Tibial artery (tissue), 4 donors: ENCODE measurements at regions of chr9 and their contacts with region 1.

Region 1: DNA sequence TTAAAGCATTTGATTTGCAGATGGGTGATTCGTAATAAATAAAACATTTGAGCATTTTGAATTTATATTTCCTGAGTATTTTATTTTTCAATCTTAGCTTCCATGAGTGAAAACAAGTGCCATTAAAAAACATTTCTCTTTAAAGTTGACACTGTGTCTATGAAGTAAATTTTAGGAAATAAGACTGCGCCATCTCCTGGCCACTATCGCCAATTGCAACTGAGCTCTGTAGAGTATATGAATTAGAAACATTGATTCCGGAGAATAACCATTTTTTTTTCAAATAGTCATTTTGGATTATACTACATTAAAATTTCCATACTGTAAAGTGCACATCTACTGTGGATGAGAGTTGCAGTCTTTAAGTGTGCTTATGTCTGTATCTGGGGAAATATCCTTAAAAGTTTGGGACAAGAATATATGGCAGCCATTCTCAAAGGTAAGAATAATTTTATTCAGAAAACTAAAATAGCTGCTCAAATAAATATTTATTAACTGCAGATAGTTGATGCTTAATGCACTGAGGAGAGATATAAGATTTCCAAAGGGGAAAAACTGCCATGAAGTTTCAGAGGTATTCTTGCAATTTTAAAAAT is 5.9 kb downstream of the DMRTA1 start:
- DNase-seq: peak in 1 of 2 donors; percentile 51
- H3K4me3 ChIP-seq: no peak overlapping the region
- H3K27ac ChIP-seq: no peak overlapping the region
- H3K4me1 ChIP-seq: peaks cover 0 to 9% (median 1%) of the 10 kb centered on the region in 4 donors
- H3K27me3 ChIP-seq: no peaks in the 10 kb centered on the region
- CTCF ChIP-seq: peak; percentile 68 to 70

Region 2: DNA sequence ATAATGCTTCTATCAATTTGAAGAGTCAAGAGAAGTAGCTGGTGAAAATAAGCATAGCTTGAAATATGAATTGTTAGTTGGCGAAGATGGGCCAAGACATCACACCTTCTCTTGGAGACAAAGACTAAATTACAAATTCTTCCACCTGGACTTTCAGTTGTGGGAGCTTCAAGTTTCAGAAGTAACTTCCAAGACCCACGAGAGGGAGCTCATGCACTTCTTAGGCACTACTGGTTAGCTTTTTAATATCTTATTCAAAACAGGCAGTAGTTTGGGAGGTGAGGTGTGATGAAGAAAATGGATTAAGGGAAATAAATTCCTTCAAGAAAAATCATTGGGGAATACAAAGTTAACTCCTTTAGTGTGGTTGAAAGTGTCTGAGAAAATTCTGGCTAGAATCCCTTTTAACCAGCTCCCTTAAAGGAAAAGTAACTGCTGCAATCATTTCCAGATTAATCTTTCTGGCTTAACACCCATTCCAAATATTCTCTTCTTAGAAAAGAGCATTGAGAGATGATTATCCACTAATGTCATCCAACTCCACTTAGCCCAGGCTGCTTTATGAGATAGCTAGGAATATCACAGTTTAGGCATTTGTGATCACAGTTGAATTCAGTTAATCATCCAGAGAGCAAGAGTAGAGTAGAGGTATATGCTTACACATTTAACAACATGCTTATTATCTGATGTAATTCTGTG is 145.4 kb before region 1 on chr9:
- intact Hi-C with region 1: loop called (anchors 10 kb)
- DNase-seq: no peak
- H3K4me3 ChIP-seq: no peak overlapping the region
- H3K27ac ChIP-seq: no peak overlapping the region
- H3K4me1 ChIP-seq: no peaks in the 10 kb centered on the region
- H3K27me3 ChIP-seq: no peaks in the 10 kb centered on the region
- CTCF ChIP-seq: peak; percentile 43 to 54

Region 3: DNA sequence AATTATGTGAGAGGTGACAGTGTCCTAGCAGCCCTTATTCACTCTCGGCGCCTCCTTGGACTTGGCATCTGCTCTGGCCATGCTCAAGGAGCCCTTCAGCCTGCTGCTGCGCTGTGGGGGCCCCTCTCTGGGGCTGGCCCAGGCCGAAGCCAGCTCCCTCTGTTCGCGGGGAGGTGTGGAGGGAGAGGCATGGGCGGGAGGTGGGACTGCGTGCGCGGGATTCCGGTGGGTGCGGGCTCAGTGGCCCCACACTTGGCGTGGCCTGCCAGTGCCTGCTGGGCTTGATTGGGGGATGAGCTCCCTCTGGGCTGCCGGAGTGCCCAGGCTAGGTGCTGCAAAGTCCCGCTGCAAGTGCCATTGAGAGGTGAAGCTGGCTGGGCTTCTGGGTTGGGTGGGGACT is 18.8 kb before region 1 on chr9:
- intact Hi-C with region 1: no loop called
- DNase-seq: no peak
- H3K4me3 ChIP-seq: no peak overlapping the region
- H3K27ac ChIP-seq: no peak overlapping the region
- H3K4me1 ChIP-seq: no peaks in the 10 kb centered on the region
- H3K27me3 ChIP-seq: no peaks in the 10 kb centered on the region
- CTCF ChIP-seq: no peak